HAP-1 (cell line): ENCODE measurements at regions of chr5 and their contacts with region 1.

Region 1: GRCh38 chr5:154405078-154405792 is 40.6 kb upstream of the SAP30L start:
- DNase-seq: peak; percentile 77 to 88
- H3K4me3 ChIP-seq: no peak overlapping the region
- H3K4me1 ChIP-seq: no peaks in the 10 kb centered on the region
- H3K27me3 ChIP-seq: no peaks in the 10 kb centered on the region

Region 2: GRCh38 chr5:153981905-153982605 is 423.2 kb before region 1 on chr5:
- in situ Hi-C with region 1: loop called (anchors 10 kb)
- DNase-seq: no peak
- H3K4me3 ChIP-seq: no peak overlapping the region
- H3K4me1 ChIP-seq: no peaks in the 10 kb centered on the region; the same call in 1 of the 2 replicates
- H3K27me3 ChIP-seq: peaks cover 9% of the 10 kb centered on the region; the same call in 1 of the 2 replicates

Region 3: DNA sequence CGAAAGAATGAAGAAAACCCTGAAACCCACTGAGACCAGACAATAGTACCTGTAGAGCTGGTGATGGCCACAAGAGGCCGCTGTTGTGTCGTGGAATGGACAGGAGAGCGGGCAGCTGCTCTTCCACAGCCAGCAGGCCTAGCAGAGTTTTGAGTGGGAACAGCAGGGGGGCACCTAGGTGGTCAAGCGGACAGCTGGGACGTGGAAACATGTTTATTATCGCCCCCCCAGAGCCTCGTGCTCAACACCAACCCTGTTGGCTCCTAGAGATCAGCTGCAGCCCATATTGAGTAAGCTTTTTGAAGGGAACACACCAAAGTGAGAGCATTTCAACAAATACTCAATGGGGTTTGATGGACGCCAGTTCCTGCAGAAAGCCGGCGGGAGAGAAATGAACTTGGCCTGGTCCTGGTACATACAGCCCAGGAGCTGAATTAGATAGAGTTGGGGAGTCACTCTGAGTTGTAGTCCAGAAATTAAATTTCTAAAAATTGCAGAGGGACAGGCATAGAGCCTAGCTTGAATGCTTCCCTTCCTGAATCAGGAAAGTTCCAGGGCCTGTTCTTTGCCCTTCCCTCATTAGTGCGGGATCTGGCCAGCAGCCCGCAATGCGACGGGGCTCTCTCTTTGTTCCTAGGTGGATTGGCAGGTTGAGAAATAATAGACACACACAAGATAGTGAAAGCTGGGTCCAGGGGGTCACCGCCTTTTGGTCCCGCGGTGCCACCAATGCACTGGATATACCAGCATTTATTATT is 332.6 kb before region 1 on chr5:
- in situ Hi-C with region 1: loop called (anchors 5 kb)
- DNase-seq: peak; percentile 55 to 86
- H3K4me3 ChIP-seq: no peak overlapping the region
- H3K4me1 ChIP-seq: peaks cover under 1% of the 10 kb centered on the region; the same call in 1 of the 2 replicates
- H3K27me3 ChIP-seq: peaks cover 54% of the 10 kb centered on the region

Region 4: DNA sequence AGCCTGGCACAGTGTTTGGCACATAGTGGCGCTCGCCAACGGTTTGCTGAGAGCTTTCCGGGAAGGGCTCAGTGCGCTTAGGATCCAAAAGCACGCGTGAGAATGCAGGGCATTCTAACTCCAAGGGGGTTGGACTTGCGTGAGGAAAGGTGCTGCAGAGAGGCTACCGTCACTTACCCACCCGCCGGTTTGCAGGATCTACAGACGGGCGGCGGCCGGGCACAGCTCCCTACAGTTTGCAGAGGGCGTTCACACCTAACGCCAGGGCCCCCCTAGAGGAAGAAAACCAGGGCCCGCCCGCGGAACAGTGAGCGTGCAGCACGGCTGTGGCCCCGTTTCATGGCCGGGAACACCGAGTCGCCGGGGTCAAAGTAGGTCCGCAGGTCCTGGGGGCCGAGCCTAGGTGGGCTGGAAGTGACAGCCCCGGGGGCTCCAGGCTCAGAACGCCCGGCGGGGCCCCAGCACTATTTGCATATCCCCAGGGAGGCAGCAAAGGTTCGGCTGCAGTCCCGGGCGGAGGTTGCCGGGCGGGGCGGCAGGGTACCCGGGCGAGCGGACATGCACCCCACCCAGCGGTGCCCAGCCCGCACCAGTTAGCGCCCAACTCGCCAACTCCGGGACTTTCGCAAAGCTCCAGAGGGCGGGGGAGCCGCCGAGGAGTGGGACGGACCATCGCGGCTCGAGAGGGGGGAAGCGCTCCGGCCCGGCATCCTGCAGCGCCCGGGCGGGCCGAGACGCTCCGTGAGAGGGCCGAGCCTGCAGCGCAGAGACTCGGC is 215.2 kb before region 1 on chr5:
- in situ Hi-C with region 1: loop called (anchors 5 kb)
- DNase-seq: peak; percentile 53 to 86
- H3K4me3 ChIP-seq: peak overlapping the region; percentile 79
- H3K4me1 ChIP-seq: peaks cover 5% of the 10 kb centered on the region; the same call in 1 of the 2 replicates
- H3K27me3 ChIP-seq: no peaks in the 10 kb centered on the region